Activated T-helper 2 cell treated with anti-CD3 and anti-CD28 coated beads, Interferon-gamma antibody, Interleukin-2, Interleukin-4, amounts not matched to agents 10 μg/mL and 5 μg/mL and 100 μg/mL, durations not matched to agents 14 hours and 24 hours and 36 hours (primary cell): ENCODE measurements at regions of chr9 and their contacts with region 1.

Region 1: DNA sequence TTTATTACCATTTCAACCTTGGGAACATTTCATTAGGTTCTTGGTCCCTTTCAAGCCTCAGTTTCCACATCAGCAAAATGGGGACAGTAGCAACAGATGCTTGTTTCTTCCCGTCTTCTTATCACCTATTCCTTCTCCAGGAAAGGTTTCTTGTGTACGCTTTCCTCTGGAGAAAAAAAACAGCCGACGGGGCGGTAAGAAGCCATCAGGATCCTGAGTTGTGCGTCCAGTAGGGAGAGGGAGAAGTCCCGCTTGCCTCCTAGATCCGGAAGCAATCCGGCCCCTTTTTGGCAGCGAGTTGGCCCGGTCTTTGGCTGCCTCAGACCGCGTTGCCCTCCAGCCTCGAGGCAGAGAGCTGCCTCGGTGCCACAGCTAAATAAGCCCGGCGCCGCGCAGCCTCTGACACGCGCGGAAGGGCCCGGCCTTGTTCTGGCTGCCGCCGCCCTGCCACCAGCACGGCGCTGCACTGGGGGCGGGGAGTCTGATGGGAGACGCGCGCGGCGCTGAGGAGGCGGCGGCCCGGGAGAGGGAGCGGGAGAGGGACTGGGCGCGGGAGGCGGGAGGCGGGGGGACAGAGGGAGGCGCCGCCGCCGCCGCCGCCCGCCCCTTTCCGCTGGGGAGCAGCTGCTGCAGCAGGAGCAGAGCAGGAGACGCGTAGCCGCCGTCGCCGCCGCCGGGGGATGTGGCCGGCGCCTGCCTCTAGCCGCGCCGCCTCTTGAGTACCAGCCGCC is at the start of gene SLC44A1:
- DNase-seq: peak; percentile 89
- H3K4me3 Mint-ChIP-seq: peak within 1 kb of the TSS; percentile 83
- H3K27ac Mint-ChIP-seq: peak within 1 kb of the TSS; percentile 15
- H3K4me1 Mint-ChIP-seq: peaks cover 9% of the 10 kb centered on the region
- H3K27me3 Mint-ChIP-seq: peaks cover 66% of the 10 kb centered on the region
- total RNA-seq, gene SLC44A1: 2.0 and 3.4 TPM in 2 replicates

Region 2: GRCh38 chr9:104604801-104605200 is 639.4 kb before region 1 on chr9:
- intact Hi-C with region 1: no loop called
- DNase-seq: no peak
- H3K4me3 Mint-ChIP-seq: no peak overlapping the region
- H3K27ac Mint-ChIP-seq: no peak overlapping the region
- H3K4me1 Mint-ChIP-seq: no peaks in the 10 kb centered on the region
- H3K27me3 Mint-ChIP-seq: no peaks in the 10 kb centered on the region

Region 3: GRCh38 chr9:104927912-104928740 is 316.0 kb before region 1 on chr9 and contains the start of gene ABCA1:
- intact Hi-C with region 1: loop called (anchors 5 kb)
- DNase-seq: peak; percentile 38
- H3K4me3 Mint-ChIP-seq: peak within 1 kb of the TSS; percentile 72
- H3K27ac Mint-ChIP-seq: no peak within 1 kb of the TSS
- H3K4me1 Mint-ChIP-seq: peaks cover 5% of the 10 kb centered on the region
- H3K27me3 Mint-ChIP-seq: peaks cover 54% of the 10 kb centered on the region
- total RNA-seq, gene ABCA1: 0.14 TPM in 1 of 2 replicates, not detected in the other

Region 4: GRCh38 chr9:105168870-105169319 is 75.3 kb before region 1 on chr9:
- intact Hi-C with region 1: no loop called
- DNase-seq: no peak
- H3K4me3 Mint-ChIP-seq: no peak overlapping the region
- H3K27ac Mint-ChIP-seq: no peak overlapping the region
- H3K4me1 Mint-ChIP-seq: no peaks in the 10 kb centered on the region
- H3K27me3 Mint-ChIP-seq: peaks cover 8% of the 10 kb centered on the region

Region 5: GRCh38 chr9:105205787-105206495 is 38.2 kb before region 1 on chr9:
- intact Hi-C with region 1: no loop called
- DNase-seq: no peak
- H3K4me3 Mint-ChIP-seq: no peak overlapping the region
- H3K27ac Mint-ChIP-seq: no peak overlapping the region
- H3K4me1 Mint-ChIP-seq: no peaks in the 10 kb centered on the region
- H3K27me3 Mint-ChIP-seq: no peaks in the 10 kb centered on the region

Region 6: GRCh38 chr9:105299190-105299854 is 55.2 kb after region 1 on chr9:
- intact Hi-C with region 1: loop called (anchors 1 kb)
- DNase-seq: no peak
- H3K4me3 Mint-ChIP-seq: no peak overlapping the region
- H3K27ac Mint-ChIP-seq: peak overlapping the region; percentile 35
- H3K4me1 Mint-ChIP-seq: peaks cover 34% of the 10 kb centered on the region
- H3K27me3 Mint-ChIP-seq: peaks cover 22% of the 10 kb centered on the region

Region 7: DNA sequence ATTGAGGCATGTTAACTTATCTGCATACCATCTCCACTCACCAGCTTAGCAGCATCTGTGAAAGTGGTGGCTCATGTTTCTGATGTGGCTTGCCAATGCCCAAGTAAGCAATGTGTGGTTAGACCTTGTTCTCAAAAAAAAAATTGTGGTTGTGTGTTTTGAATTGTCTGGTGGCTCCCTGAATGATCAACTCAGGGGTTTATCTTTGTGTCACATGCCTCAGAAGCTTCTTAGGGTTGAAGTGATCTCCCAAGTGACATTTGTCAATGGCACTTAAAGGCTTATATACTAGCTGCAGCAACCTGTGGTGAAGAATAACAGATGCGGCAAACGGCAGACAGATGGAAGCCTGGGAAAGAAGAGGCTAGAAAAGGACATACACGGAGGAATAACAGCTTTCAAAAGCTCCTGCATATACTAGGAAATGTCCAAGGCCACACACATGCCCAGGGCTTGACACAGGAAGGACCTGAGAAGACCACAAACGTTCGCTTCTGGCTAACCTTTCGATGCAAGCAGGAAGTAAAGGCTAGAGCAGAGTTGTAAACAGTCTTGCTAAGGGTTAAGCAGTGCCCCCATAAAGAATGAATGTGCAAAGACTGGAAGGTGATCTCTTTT is 161.5 kb after region 1 on chr9:
- intact Hi-C with region 1: loop called (anchors 2 kb)
- DNase-seq: peak; percentile 69
- H3K4me3 Mint-ChIP-seq: peak overlapping the region; percentile 31
- H3K27ac Mint-ChIP-seq: no peak overlapping the region
- H3K4me1 Mint-ChIP-seq: peaks cover 24% of the 10 kb centered on the region
- H3K27me3 Mint-ChIP-seq: peaks cover 58% of the 10 kb centered on the region

Region 8: GRCh38 chr9:105541838-105542237 is 297.7 kb after region 1 on chr9:
- intact Hi-C with region 1: no loop called
- DNase-seq: no peak
- H3K4me3 Mint-ChIP-seq: no peak overlapping the region
- H3K27ac Mint-ChIP-seq: no peak overlapping the region
- H3K4me1 Mint-ChIP-seq: peaks cover 3% of the 10 kb centered on the region
- H3K27me3 Mint-ChIP-seq: peaks cover 2% of the 10 kb centered on the region

Region 9: DNA sequence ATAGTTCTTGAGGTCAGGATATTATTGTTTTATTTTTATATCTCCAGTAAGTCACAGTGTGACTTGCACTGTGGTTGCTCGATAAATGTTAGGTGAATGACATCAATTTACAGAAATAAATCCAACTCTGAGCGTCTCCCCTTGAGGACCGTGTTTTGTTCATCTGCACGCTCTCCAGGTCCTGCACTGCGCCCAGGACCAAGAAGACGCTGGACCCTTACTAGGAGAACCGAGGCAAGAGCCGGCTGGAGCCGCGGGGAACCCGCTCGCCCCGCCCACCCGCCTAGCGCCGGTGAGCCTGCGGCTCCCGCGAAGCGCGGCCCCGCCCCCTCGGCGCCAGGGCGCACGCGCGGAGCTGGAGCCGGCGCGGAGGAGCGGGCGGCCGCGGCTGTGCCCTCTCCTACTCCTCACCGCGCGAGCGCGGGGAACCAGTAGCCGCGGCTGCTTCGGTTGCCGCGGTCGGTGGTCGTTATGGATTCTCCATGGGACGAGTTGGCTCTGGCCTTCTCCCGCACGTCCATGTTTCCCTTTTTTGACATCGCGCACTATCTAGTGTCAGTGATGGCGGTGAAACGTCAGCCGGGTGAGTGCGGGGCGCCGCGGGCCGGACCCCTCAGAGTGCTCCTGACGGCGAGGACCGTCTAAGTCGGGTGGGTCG is 450.2 kb after region 1 on chr9 and contains the start of gene TMEM38B:
- intact Hi-C with region 1: loop called (anchors 10 kb)
- DNase-seq: peak; percentile 73
- H3K4me3 Mint-ChIP-seq: peak within 1 kb of the TSS; percentile 83
- H3K27ac Mint-ChIP-seq: peak within 1 kb of the TSS; percentile 53
- H3K4me1 Mint-ChIP-seq: peaks cover 13% of the 10 kb centered on the region
- H3K27me3 Mint-ChIP-seq: peaks cover 27% of the 10 kb centered on the region
- total RNA-seq, gene TMEM38B: 11.3 and 13.1 TPM in 2 replicates